ENCODE measurements at regions of chr1 and their contacts with region 1.

Region 1: GRCh38 chr1:100037927-100038659 is 68.3 kb downstream of the SLC35A3 start:
- DNase-seq: peak; percentile 89
- H3K4me3 Mint-ChIP-seq: peak overlapping the region; percentile 95
- H3K27ac Mint-ChIP-seq: peak overlapping the region; percentile 99
- H3K4me1 Mint-ChIP-seq: peaks cover 54% of the 10 kb centered on the region
- H3K27me3 Mint-ChIP-seq: no peaks in the 10 kb centered on the region

Region 2: DNA sequence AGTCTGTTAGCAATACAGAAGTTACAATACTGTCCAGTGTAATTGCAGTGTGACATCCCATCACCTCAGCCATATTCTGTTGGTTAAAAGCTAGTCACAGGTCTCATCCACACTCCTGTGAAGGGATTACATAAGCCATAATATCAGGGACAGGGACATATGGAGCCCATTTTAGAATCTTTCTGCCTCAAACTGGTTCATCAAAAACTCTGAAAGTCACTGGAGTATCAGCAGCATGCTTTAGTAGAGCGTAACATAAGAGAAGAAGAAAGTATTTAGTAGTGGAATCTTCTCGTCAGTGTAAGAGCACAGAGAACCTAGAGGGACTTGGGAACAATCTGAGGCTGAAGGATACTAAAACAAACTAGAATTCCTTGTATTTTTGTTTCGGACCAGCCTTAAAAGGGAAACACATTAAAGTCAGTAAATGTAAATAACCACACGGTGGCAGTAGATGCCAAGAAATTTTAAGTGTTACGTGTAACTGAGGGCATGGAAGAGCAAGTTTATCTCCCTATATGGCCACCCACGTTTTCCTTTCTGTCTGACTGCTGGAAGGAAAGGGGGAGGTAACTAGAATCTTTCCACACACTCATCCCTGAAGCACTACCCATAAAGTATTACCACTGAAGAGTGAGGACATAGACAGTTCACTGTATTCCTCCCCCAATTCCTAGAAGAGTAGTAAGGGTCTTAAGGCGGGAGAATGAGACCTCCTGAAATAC is 229.5 kb before region 1 on chr1:
- CTCF ChIA-PET with region 1: interaction called, 3 read pairs
- intact Hi-C with region 1: loop called (anchors 1 kb)
- DNase-seq: peak; percentile 53
- H3K4me3 Mint-ChIP-seq: no peak overlapping the region
- H3K27ac Mint-ChIP-seq: no peak overlapping the region
- H3K4me1 Mint-ChIP-seq: peaks cover 8% of the 10 kb centered on the region
- H3K27me3 Mint-ChIP-seq: peaks cover 2% of the 10 kb centered on the region

Region 3: GRCh38 chr1:99969729-99970621 is 68.1 kb before region 1 on chr1 and contains the start of gene SLC35A3:
- CTCF ChIA-PET with region 1: no interaction called
- intact Hi-C with region 1: loop called (anchors 1 kb)
- DNase-seq: peak; percentile 85
- H3K4me3 Mint-ChIP-seq: peak within 1 kb of the TSS; percentile 96
- H3K27ac Mint-ChIP-seq: peak within 1 kb of the TSS; percentile 85
- H3K4me1 Mint-ChIP-seq: peaks cover 22% of the 10 kb centered on the region
- H3K27me3 Mint-ChIP-seq: no peaks in the 10 kb centered on the region
- total RNA-seq, gene SLC35A3: 13.8 to 15.5 TPM

Region 4: GRCh38 chr1:100249537-100250257 is 211.6 kb after region 1 on chr1 and contains the start of gene DBT:
- CTCF ChIA-PET with region 1: no interaction called
- intact Hi-C with region 1: loop called (anchors 1 kb)
- DNase-seq: peak; percentile 97
- H3K4me3 Mint-ChIP-seq: no peak within 1 kb of the TSS
- H3K27ac Mint-ChIP-seq: no peak within 1 kb of the TSS
- H3K4me1 Mint-ChIP-seq: peaks cover 18% of the 10 kb centered on the region
- H3K27me3 Mint-ChIP-seq: no peaks in the 10 kb centered on the region
- total RNA-seq, gene DBT: 12.3 to 12.5 TPM

Region 5: DNA sequence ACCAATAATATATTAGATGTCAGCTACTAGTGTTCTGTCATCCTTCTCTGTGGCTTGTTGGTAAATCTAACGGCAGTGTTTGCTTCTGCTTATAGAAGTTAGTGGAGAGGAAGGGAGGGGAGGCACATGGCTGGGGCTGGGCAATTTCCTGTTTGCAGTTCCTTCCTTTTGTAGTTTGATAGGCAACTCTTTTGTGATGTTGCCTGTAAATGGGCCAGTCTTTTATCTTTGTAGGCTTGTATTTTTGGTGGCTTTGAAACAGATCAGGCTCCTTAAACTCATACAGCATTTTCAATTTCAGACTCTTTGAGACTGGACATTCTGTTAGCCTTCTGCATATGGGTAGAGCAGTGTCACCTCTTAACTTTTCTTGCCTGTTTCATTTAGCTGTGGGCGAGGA is 362.3 kb after region 1 on chr1:
- CTCF ChIA-PET with region 1: no interaction called
- intact Hi-C with region 1: loop called (anchors 1 kb)
- DNase-seq: peak; percentile 73
- H3K4me3 Mint-ChIP-seq: peak overlapping the region; percentile 60
- H3K27ac Mint-ChIP-seq: peak overlapping the region; percentile 94
- H3K4me1 Mint-ChIP-seq: peaks cover 75% of the 10 kb centered on the region
- H3K27me3 Mint-ChIP-seq: no peaks in the 10 kb centered on the region